Endothelial cell of umbilical vein (primary cell): ENCODE measurements at regions of chr4 and their contacts with region 1.

Region 1: DNA sequence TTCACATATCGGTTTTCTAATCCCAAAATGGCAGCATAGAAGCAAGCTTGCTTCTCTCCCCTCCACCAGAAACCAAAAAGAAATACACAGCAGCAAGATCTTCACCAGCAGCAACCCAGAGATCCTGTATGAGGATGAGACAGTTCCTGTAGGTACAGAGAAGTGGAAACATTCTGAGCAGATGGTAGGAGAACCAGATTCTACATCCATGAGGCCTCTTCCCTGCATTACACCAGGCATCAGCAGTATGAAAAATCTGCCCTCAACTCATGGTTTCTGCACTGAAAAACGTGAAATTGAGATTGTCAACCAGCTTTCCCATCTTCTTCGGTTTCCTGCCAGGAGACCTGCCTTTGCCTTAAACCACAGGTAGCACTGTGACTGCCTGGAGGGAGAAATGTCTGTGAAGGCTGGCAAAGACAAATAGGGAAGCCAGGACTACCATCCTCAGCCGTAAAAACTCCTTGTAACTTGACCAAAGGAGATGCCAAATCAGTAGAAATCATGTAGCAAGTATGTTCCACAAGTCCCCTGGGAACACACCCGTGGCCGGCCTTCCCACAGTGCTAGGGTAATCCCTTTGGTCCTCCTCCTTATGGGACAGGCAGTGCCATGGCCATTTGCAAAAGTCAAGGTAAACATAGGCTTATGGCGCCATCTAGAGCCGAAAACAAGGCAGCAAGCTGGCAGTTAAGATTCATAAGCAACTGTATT is 24.0 kb upstream of the MTHFD2L start:
- DNase-seq: peak; percentile 90
- H3K4me3 ChIP-seq: no peak overlapping the region
- H3K27ac ChIP-seq: no peak overlapping the region
- H3K4me1 ChIP-seq: no peaks in the 10 kb centered on the region
- H3K27me3 ChIP-seq: no peaks in the 10 kb centered on the region
- CTCF ChIP-seq: peak; percentile 64 to 81
- POLR2A ChIP-seq: no peak

Region 2: GRCh38 chr4:73341454-73341853 is 792.5 kb before region 1 on chr4:
- CTCF ChIA-PET with region 1: interaction called, 30 read pairs
- POLR2A ChIA-PET with region 1: no interaction called
- dilution Hi-C with region 1: no loop called
- intact Hi-C with region 1: loop called (anchors 5 kb)
- DNase-seq: peak; percentile 34
- H3K4me3 ChIP-seq: no peak overlapping the region
- H3K27ac ChIP-seq: no peak overlapping the region
- H3K4me1 ChIP-seq: no peaks in the 10 kb centered on the region
- H3K27me3 ChIP-seq: peaks cover 0 to 3% of the 10 kb centered on the region in 2 experiments
- CTCF ChIP-seq: peak in 1 of 2 donors; percentile 29
- POLR2A ChIP-seq: no peak

Region 3: GRCh38 chr4:73593631-73594241 is 540.2 kb before region 1 on chr4:
- CTCF ChIA-PET with region 1: interaction called, 61 read pairs
- POLR2A ChIA-PET with region 1: no interaction called
- dilution Hi-C with region 1: no loop called
- intact Hi-C with region 1: loop called (anchors 1 kb)
- DNase-seq: peak; percentile 55
- H3K4me3 ChIP-seq: no peak overlapping the region
- H3K27ac ChIP-seq: no peak overlapping the region
- H3K4me1 ChIP-seq: no peaks in the 10 kb centered on the region
- H3K27me3 ChIP-seq: no peaks in the 10 kb centered on the region
- CTCF ChIP-seq: peak; percentile 33 to 42
- POLR2A ChIP-seq: no peak

Region 4: DNA sequence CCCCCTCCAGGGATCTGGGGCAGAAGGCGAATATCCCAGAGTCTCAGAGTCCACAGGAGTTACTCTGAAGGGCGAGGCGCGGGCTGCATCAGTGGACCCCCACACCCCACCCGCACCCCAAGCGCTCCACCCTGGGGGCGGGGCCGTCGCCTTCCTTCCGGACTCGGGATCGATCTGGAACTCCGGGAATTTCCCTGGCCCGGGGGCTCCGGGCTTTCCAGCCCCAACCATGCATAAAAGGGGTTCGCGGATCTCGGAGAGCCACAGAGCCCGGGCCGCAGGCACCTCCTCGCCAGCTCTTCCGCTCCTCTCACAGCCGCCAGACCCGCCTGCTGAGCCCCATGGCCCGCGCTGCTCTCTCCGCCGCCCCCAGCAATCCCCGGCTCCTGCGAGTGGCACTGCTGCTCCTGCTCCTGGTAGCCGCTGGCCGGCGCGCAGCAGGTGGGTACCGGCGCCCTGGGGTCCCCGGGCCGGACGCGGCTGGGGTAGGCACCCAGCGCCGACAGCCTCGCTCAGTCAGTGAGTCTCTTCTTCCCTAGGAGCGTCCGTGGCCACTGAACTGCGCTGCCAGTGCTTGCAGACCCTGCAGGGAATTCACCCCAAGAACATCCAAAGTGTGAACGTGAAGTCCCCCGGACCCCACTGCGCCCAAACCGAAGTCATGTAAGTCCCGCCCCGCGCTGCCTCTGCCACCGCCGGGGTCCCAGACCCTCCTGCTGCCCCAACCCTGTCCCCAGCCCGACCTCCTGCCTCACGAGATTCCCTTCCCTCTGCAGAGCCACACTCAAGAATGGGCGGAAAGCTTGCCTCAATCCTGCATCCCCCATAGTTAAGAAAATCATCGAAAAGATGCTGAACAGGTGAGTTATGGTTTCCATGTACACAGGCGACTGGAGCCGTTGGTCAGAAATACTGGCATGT is 264.6 kb before region 1 on chr4 and contains the start of gene CXCL1:
- CTCF ChIA-PET with region 1: interaction called, 12 read pairs
- POLR2A ChIA-PET with region 1: no interaction called
- dilution Hi-C with region 1: no loop called
- intact Hi-C with region 1: loop called (anchors 1 kb)
- DNase-seq: peak; percentile 52
- H3K4me3 ChIP-seq: peak within 1 kb of the TSS; percentile 49 to 81 (median 67)
- H3K27ac ChIP-seq: peak within 1 kb of the TSS; percentile 55
- H3K4me1 ChIP-seq: peaks cover 35% of the 10 kb centered on the region
- H3K27me3 ChIP-seq: no peaks in the 10 kb centered on the region
- CTCF ChIP-seq: no peak
- POLR2A ChIP-seq: peak; percentile 68
- total RNA-seq, gene CXCL1: 9.0 and 20.0 TPM in 2 replicates

Region 5: DNA sequence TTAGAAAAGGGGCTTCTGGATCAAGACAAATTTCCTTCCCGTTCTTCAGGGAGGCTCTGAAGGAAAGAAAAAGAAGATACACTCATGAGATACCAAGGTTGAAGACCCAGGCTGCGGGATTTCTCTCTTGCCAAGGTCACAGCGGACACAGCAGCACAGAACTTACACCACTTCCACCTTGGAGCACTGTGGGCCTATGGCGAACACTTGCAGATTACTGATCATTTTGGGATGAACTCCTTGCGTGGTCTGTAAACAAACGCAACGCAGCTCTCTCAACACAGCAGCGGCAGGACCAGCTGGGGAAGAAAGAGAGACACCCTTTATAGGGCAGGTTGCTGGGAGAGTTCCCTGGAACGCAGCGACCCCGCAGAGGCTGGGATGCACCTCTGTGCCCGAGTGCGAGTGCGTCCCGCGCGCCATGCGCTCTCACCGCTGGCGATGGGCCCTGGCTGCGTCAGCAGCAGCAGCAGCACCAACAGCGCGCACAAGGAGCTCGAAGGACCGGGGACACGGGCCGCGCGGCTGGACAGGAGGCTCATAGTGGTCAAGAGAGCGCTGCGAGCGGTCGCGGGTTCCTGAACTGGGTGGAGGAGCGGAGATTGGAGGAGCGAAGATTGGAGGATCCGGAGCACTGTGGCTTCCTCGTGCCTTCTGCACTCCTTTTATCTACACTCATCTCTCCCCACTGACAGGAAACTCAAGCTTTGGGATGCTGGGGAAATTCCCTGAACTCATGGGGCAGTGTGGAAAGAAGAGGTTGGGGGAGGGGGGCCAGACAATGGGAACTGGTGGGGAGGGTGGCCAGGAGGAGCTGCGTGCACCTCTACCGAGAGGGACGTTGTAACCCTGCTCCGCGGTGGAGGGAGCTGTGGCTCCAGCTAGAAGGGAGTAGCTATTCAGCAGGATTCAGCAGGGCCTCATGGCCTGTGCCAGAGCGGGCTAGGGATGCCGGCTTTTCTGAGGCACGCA is 135.6 kb before region 1 on chr4 and contains the start of gene CXCL5:
- CTCF ChIA-PET with region 1: interaction called, 14 read pairs
- POLR2A ChIA-PET with region 1: interaction called, 3 read pairs
- dilution Hi-C with region 1: no loop called
- intact Hi-C with region 1: loop called (anchors 2 kb)
- DNase-seq: peak; percentile 41
- H3K4me3 ChIP-seq: peak within 1 kb of the TSS; percentile 13 to 44 (median 40)
- H3K27ac ChIP-seq: no peak within 1 kb of the TSS
- H3K4me1 ChIP-seq: peaks cover 10% of the 10 kb centered on the region
- H3K27me3 ChIP-seq: no peaks in the 10 kb centered on the region
- CTCF ChIP-seq: peak in 1 of 2 donors; percentile 31
- POLR2A ChIP-seq: no peak
- total RNA-seq, gene CXCL5: 0.21 and 0.33 TPM in 2 replicates

Region 6: DNA sequence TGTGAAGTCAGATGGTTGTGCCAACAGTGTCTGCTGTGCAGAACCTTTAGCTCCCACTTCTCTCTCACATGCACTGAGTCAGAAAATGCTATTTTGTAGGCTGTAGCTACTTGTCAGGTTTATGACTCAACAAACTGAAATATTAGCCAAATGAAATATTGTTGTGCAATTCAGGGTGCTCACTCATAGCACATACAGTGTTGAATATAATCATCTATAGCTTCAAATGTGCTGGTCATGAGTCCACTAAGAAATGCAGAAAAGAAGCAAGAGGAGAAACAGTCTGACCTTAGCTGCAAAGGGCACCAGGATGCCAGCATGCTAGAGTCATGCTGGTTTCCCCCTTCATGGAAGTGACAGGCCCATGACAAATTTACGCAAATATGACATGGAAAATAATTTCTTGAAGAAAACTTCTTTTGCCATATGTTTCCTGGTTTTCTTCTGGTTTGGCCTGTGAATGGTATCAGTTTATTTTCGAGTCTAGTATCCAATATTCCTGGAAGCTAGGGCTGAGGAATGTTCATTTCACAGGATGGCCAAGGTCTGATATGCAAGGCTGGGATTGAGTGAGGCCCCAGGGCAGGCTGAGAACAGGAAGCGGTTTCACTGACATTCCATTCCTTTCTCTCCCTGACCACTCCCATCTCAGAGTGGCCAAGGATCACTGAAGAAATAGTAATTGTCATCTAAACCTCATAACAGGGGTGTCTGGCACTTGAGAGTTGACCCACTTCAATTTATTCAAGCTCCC is 24.6 kb before region 1 on chr4:
- CTCF ChIA-PET with region 1: interaction called, 40 read pairs
- POLR2A ChIA-PET with region 1: no interaction called
- dilution Hi-C with region 1: no loop called
- intact Hi-C with region 1: no loop called
- DNase-seq: peak; percentile 93
- H3K4me3 ChIP-seq: no peak overlapping the region
- H3K27ac ChIP-seq: peak overlapping the region; percentile 92
- H3K4me1 ChIP-seq: peaks cover 44% of the 10 kb centered on the region
- H3K27me3 ChIP-seq: no peaks in the 10 kb centered on the region
- CTCF ChIP-seq: no peak
- POLR2A ChIP-seq: peak; percentile 59

Region 7: GRCh38 chr4:74157561-74158465 is 23.9 kb after region 1 on chr4 and contains the start of gene MTHFD2L:
- CTCF ChIA-PET with region 1: interaction called, 12 read pairs
- POLR2A ChIA-PET with region 1: no interaction called
- dilution Hi-C with region 1: no loop called
- intact Hi-C with region 1: no loop called
- DNase-seq: peak; percentile 96
- H3K4me3 ChIP-seq: peak within 1 kb of the TSS; percentile 73 to 97 (median 76)
- H3K27ac ChIP-seq: peak within 1 kb of the TSS; percentile 90
- H3K4me1 ChIP-seq: peaks cover 29% of the 10 kb centered on the region
- H3K27me3 ChIP-seq: no peaks in the 10 kb centered on the region
- CTCF ChIP-seq: no peak
- POLR2A ChIP-seq: peak; percentile 88
- total RNA-seq, gene MTHFD2L: 12.4 and 15.2 TPM in 2 replicates

Region 8: GRCh38 chr4:75412746-75413145 is 1278.8 kb after region 1 on chr4:
- CTCF ChIA-PET with region 1: no interaction called
- POLR2A ChIA-PET with region 1: no interaction called
- dilution Hi-C with region 1: no loop called
- intact Hi-C with region 1: no loop called
- DNase-seq: no peak
- H3K4me3 ChIP-seq: no peak overlapping the region
- H3K27ac ChIP-seq: no peak overlapping the region
- H3K4me1 ChIP-seq: no peaks in the 10 kb centered on the region
- H3K27me3 ChIP-seq: no peaks in the 10 kb centered on the region
- CTCF ChIP-seq: no peak
- POLR2A ChIP-seq: no peak